Posterior vena cava (tissue), 2 donors: ENCODE measurements at regions of chr19 and their contacts with region 1.

Region 1: GRCh38 chr19:33778089-33778791 is 18.4 kb upstream of the KCTD15 start:
- DNase-seq: peak; percentile 96

Region 2: GRCh38 chr19:33241530-33242101 is 536.6 kb before region 1 on chr19:
- intact Hi-C with region 1: loop called in 1 of 2 experiments (anchors 10 kb)
- DNase-seq: no peak

Region 3: DNA sequence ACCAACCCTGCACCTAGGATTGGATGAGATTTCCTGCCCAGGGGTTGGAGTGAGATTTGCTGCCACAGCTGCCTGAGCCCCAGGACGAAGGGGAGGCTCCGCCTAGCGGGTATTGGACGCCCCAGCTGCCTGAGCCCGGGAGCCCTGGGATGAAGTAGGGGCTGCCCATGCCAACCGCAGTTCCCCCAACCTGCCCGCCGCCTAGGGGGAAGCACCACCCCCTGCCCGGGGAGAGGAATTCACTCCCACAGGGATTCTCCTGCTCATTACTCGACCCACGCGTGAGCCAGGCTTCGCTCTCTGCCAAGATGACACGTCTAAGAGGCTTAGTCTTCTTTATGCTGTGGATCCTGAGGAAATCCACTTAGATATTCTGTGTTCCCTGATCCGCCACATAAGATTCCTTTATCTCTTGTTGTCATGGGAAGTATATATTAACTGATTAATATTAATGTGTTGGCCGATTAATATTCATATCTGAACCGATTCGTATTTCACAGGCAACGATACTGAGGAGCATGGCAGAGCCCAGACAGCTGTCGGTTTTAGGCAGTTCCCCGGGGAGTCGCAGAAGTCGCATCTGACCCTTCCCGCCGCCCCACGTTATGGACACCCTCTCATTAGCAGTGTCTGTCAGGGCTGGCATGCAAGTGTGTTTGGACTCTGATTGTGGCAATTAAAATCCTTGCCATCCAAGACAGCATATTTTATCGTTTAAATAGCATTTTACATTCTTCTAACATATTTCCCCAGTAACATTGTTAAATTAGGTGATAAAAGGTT is 26.0 kb before region 1 on chr19:
- intact Hi-C with region 1: no loop called
- DNase-seq: no peak

Region 4: DNA sequence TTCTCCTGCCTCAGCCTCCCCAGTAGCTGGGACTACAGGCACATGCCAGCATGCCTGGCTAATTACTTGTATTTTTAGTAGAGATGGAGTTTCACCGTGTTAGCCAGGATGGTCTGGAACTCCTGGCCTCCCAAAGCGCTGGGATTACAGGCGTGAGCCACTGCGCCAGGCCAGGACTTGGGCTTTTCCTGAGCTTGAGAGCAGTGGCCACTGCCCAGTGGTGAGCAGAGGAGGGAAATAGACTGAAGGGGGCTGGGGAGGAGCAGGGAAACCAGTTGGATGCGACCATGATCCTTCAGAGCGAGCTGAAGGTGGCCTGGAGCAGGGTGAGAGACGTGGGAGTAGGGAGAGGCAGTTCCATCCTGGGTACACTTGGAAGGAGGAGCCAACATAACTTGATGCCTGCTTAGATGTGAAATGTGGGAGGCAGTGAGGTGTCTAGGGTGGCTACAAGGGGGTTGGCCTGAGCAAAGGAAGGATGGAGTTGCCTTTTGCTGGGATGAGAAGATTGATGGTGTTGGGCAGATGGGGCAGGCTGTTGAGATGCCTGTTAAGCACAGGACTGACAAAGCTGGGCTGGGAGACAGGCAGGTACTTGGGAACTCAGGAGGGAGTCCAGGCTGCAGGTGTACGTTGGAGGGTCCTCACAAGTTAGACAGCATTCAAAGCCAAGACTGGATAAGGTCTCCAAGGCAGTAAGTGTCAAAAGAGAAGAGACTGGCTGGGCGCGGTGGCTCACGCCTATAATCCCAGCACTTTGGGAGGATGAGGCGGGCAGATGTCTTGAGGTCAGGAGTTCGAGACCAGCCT is 50.2 kb after region 1 on chr19:
- intact Hi-C with region 1: no loop called
- DNase-seq: peak; percentile 45

Region 5: DNA sequence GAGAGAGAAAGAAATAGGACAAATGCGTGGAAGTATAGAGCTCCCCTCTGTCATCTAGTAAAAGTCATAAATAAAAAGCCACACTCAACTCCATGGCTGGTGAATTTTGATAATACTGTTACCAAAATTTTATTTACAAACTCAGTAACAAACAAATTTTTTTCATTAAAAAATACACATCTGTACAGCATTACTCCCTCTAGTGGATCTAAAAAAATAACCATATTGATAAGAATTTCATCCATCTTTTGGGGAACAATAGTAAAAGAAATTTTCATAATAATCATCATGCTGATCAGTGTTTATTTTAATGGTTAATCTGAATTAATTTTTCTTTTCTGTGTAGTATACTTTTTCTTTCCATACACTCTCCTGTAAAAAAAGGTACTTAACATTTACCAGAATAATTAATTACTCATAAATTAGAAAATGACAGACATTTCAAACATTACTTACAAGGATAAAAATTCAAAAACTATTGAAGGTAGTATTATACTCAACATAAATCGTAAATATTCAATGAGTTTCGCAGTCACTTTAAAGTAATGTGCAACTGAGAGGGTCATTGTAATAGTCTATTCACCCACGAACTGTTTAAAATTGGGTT is 220.6 kb after region 1 on chr19:
- intact Hi-C with region 1: loop called (anchors 5 to 10 kb)
- DNase-seq: no peak

Region 6: GRCh38 chr19:34096020-34096915 is 318.0 kb after region 1 on chr19:
- intact Hi-C with region 1: loop called (anchors 1 to 5 kb)
- DNase-seq: no peak